ENCODE measurements at regions of chr12 and their contacts with region 1.

Region 1: DNA sequence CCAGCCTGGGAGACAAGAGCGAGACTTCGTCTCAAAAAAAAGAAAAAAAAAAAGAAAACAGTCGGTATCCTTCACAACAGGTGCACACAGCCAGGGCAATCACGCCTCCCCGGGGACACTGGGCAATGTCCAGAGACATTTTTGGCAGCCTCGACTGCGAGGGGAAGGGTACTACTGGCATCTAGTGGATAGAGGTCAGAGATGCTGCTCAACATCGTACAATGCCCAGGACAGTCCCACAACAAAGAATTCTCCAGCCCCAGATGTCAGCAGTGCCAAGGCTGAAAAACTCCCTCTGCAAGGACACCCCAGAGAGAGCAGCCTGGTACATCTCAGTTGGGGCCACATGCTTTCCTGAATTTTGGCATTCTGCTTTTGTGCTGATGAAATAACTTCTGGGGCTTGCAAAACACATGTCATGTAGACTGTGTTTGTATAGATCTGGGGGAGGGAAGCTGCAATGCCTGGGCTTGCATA is 21.5 kb downstream of the ALDH2 start:
- DNase-seq: peak; percentile 55
- ATAC-seq: peak; percentile 69
- H3K4me3 ChIP-seq: no peak overlapping the region
- H3K27ac ChIP-seq: peak overlapping the region; percentile 85; the same call in 1 of the 2 replicates
- H3K4me1 ChIP-seq: peaks cover 6% of the 10 kb centered on the region; the same call in 1 of the 2 replicates
- H3K27me3 ChIP-seq: no peaks in the 10 kb centered on the region
- CTCF ChIP-seq: peak; percentile 44
- POLR2A ChIP-seq: no peak
- RAD21 ChIP-seq: peak; percentile 64

Region 2: DNA sequence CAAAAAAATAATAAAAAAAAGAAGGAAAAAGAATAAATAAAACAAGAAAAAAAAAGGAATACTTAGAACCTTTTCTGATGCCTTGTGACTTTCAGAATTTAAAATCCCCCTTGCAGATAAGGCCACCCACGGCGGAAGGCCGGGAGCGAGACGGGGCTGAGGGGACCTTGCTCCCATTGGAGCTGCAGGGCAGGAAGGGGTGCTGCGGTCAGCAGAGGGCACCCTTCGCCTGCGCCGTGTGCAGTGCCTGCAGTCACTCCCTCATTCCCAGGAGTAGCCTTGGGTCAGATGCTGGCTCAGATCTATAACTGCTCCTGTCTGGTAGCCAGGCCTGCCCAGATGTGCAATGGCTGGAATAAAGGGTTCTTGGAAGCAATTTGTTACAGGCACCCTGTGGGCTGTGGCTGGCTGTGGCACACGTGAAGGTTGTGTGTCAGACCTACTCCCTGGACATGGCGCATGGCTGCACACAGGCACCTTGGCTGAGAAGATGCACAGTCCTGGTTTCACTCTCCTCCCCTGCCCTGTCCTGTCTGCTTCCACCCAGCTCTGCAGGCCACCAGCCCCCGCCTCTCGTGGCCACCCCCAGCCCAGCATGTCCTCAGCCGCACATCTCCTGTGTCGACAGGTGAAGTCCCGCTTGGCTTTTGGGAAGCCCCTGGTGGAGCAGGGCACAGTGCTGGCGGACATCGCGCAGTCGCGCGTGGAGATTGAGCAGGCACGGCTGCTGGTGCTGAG is 34.9 kb before region 1 on chr12:
- CTCF ChIA-PET with region 1: interaction called, 4 read pairs
- POLR2A ChIA-PET with region 1: no interaction called
- dilution Hi-C with region 1: no loop called
- in situ Hi-C with region 1: no loop called
- intact Hi-C with region 1: loop called (anchors 1 kb)
- DNase-seq: peak; percentile 61
- ATAC-seq: peak; percentile 94
- H3K4me3 ChIP-seq: no peak overlapping the region
- H3K27ac ChIP-seq: no peak overlapping the region
- H3K4me1 ChIP-seq: peaks cover 13% of the 10 kb centered on the region; the same call in 1 of the 2 replicates
- H3K27me3 ChIP-seq: no peaks in the 10 kb centered on the region
- CTCF ChIP-seq: peak; percentile 86
- POLR2A ChIP-seq: no peak
- RAD21 ChIP-seq: peak; percentile 85

Measured in IMR-90 (cell line).